ENCODE measurements at regions of chr13 and their contacts with region 1.

Region 1: DNA sequence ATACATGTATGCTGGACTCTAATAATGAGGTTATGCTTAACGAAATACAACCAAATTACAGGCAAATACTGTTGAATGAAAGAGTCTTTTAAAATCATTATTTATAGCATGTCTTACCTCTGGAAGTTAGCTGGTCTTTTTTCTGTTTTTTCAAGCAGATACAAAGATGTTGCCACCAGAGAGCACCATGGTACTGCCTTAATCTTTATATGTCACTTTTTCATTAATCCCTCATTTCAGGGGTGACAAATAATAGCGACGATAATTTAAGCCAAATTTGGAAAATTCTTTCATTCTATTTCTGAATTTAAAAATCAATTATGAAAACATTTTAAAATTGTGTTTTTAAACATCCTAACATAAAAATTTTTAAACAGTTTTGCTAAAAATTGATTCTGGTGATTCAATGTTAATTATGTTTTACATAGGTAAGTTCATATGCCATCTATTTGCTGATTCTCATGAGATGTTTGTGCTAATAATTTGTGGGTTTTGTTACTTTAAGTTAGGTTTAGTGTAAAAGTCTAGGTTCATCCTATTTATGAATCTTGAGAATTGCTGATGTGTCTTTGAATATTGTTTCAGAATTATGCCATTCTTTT is 379.3 kb upstream of the SGCG start:
- DNase-seq: peak; percentile 5
- ATAC-seq: no peak
- H3K4me3 ChIP-seq: no peak overlapping the region
- H3K27ac ChIP-seq: no peak overlapping the region
- H3K4me1 ChIP-seq: no peaks in the 10 kb centered on the region
- H3K27me3 ChIP-seq: no peaks in the 10 kb centered on the region
- CTCF ChIP-seq: peak; percentile 36
- POLR2A ChIP-seq: no peak
- RAD21 ChIP-seq: peak; percentile 42

Region 2: DNA sequence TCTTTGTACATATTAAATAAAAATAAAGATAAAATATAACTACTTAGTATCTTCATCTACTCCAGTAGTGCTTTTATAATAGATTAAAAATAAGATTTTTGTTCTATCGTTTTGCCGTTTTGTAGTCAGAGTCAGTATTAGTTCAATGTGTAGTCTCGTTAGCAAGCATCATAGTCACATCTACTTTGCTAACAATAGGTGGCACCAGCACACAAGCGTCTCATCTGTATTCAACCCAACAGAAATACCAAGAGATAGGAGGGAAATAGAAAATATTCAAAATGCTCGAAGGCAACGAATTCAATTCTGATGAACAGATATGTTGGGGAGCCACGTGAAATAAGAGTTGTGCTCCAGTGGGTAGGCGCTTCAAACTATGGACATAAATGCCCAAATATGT is 1176.1 kb before region 1 on chr13:
- CTCF ChIA-PET with region 1: no interaction called
- POLR2A ChIA-PET with region 1: no interaction called
- dilution Hi-C with region 1: no loop called
- in situ Hi-C with region 1: loop called (anchors 25 kb)
- intact Hi-C with region 1: loop called (anchors 5 kb)
- DNase-seq: peak; percentile 52
- ATAC-seq: peak; percentile 94
- H3K4me3 ChIP-seq: no peak overlapping the region
- H3K27ac ChIP-seq: no peak overlapping the region
- H3K4me1 ChIP-seq: no peaks in the 10 kb centered on the region
- H3K27me3 ChIP-seq: peaks cover 4% of the 10 kb centered on the region
- CTCF ChIP-seq: peak; percentile 74
- POLR2A ChIP-seq: no peak
- RAD21 ChIP-seq: peak; percentile 82

Region 3: GRCh38 chr13:22925881-22926747 is 124.6 kb after region 1 on chr13:
- CTCF ChIA-PET with region 1: no interaction called
- POLR2A ChIA-PET with region 1: no interaction called
- dilution Hi-C with region 1: no loop called
- in situ Hi-C with region 1: no loop called
- intact Hi-C with region 1: no loop called
- DNase-seq: no peak
- ATAC-seq: peak; percentile 44
- H3K4me3 ChIP-seq: no peak overlapping the region
- H3K27ac ChIP-seq: no peak overlapping the region
- H3K4me1 ChIP-seq: no peaks in the 10 kb centered on the region
- H3K27me3 ChIP-seq: no peaks in the 10 kb centered on the region; the same call in 1 of the 2 replicates
- CTCF ChIP-seq: no peak
- POLR2A ChIP-seq: no peak
- RAD21 ChIP-seq: no peak

Region 4: DNA sequence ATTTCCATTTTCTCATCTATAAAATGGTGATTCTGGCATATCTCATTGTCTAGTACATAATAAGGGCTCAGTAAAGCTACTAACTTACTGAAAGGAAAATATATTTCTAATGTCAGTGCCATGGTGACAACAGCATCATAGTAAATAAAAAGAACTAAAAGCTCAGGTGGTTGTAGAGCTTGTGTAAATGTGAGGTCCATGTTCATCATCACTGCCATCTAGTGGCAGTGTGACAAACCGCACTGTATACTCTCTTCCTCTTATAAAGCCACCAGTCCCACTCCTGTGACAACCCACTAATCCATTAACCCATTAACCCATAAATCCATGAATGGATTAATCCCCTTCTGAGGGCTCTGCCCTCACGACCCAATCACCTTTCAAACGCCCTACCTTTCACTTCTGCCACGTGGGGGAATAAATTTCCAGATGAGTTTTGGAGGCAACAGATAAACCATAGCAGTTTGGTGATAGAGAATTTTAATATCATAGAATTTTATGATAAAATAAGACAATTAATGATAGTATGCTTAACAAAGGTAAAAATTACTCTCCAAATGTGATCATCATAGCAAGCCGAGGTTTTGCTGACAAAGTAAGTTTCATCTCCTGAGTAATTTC is 218.8 kb after region 1 on chr13:
- CTCF ChIA-PET with region 1: interaction called, 3 read pairs
- POLR2A ChIA-PET with region 1: no interaction called
- dilution Hi-C with region 1: no loop called
- in situ Hi-C with region 1: no loop called
- intact Hi-C with region 1: loop called (anchors 2 kb)
- DNase-seq: peak; percentile 57
- ATAC-seq: peak; percentile 88
- H3K4me3 ChIP-seq: no peak overlapping the region
- H3K27ac ChIP-seq: no peak overlapping the region
- H3K4me1 ChIP-seq: no peaks in the 10 kb centered on the region
- H3K27me3 ChIP-seq: no peaks in the 10 kb centered on the region
- CTCF ChIP-seq: peak; percentile 65
- POLR2A ChIP-seq: no peak
- RAD21 ChIP-seq: peak; percentile 45

Region 5: DNA sequence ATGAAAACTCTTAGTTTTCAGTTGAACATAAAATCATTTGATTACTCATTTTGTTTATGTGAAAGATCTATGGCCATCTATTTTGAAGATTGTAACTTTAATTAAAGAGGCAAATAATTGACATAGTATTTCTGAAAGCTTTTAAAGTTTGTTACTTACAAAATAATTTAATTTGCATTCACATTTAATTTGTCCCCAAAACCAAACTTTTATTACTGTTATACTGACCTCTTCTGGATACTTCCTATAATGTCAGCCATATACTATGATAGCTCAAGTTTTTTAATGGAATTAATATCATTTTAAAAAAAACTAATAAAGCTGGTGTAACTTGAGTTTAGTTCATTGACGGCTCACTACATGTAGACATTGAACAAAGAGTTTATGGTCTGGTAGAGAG is 374.4 kb after region 1 on chr13:
- CTCF ChIA-PET with region 1: no interaction called
- POLR2A ChIA-PET with region 1: no interaction called
- dilution Hi-C with region 1: no loop called
- in situ Hi-C with region 1: no loop called
- intact Hi-C with region 1: loop called (anchors 10 kb)
- DNase-seq: peak; percentile 11
- ATAC-seq: peak; percentile 62; the same call in 1 of the 2 replicates
- H3K4me3 ChIP-seq: no peak overlapping the region
- H3K27ac ChIP-seq: no peak overlapping the region
- H3K4me1 ChIP-seq: no peaks in the 10 kb centered on the region
- H3K27me3 ChIP-seq: 0 out of 2 replicates have a peak, but pooled peaks cover 2% of the 10 kb centered on the region
- CTCF ChIP-seq: peak; percentile 46
- POLR2A ChIP-seq: no peak
- RAD21 ChIP-seq: peak; percentile 12; the same call in 1 of the 2 replicates

Region 6: DNA sequence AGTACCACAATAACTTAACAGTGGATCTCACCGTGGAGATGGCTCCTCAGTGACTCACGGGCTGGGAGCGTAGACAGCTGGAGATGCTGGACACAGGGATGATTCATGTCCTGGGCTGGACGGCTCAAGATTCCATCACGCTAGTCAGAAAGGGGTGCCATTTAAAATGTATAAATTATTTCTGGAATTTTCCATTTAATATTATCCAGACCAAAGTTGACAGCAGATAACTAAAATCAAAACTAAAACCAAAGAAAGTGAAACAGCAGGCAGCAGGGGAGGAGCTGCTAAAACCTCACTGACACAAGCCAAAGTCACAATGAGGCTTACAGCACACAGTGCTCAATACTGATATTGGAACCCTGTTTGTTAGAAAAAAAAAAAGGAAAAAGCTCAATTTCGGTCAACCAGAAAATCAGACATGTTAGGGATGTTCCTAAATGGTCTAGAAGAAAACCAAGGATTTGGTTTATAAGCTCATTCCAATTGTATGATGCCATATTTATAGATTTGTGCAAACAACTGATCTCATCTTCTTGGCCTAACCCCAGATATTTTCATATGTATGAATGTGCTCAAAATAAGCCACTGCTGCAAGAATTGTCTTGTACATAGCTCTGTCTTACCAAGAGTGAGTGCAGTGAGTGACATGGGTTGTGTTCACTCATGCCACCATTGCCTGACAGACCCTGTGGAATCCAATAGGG is 520.2 kb after region 1 on chr13:
- CTCF ChIA-PET with region 1: interaction called, 6 read pairs
- POLR2A ChIA-PET with region 1: no interaction called
- dilution Hi-C with region 1: no loop called
- in situ Hi-C with region 1: no loop called
- intact Hi-C with region 1: loop called (anchors 1 kb)
- DNase-seq: peak; percentile 94
- ATAC-seq: peak; percentile 82
- H3K4me3 ChIP-seq: peak overlapping the region; percentile 32; the same call in 1 of the 2 replicates
- H3K27ac ChIP-seq: peak overlapping the region; percentile 97
- H3K4me1 ChIP-seq: peaks cover 20% of the 10 kb centered on the region
- H3K27me3 ChIP-seq: no peaks in the 10 kb centered on the region
- CTCF ChIP-seq: no peak
- POLR2A ChIP-seq: peak; percentile 36; the same call in 1 of the 2 replicates
- RAD21 ChIP-seq: no peak